Activated CD8-positive, alpha-beta memory T cell treated with anti-CD3 and anti-CD28 coated beads, Interleukin-2, amount 10 ng/mL, durations not matched to agents 7 days and 5 days (primary cell): ENCODE measurements at regions of chr14 and their contacts with region 1.

Region 1: GRCh38 chr14:73741386-73741875 is 27.2 kb upstream of the PNMA1 start:
- DNase-seq: peak; percentile 83
- ATAC-seq: peak; percentile 71
- H3K4me3 Mint-ChIP-seq: peak overlapping the region; percentile 78
- H3K27ac Mint-ChIP-seq: peak overlapping the region; percentile 92
- H3K4me1 Mint-ChIP-seq: peaks cover 71% of the 10 kb centered on the region
- H3K27me3 Mint-ChIP-seq: no peaks in the 10 kb centered on the region

Region 2: DNA sequence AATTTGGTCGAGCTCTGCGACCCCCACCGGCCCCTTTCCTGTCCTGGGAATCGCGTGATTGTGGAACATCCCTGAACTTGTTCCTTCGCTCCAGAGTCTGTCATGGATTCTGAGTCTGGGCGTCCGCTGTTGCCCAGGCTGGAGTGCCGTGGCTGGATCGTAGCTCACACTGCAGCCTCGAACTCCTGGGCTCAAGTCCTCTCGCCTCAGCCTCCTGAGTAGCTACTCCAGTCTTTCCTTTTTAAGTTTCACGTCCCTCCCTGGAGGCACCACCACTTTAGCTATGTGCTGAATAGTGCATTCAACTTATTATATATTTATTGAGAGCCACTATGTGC is 128.4 kb before region 1 on chr14:
- CTCF ChIA-PET with region 1: no interaction called
- DNase-seq: no peak
- ATAC-seq: no peak
- H3K4me3 Mint-ChIP-seq: peak overlapping the region; percentile 79
- H3K27ac Mint-ChIP-seq: peak overlapping the region; percentile 78
- H3K4me1 Mint-ChIP-seq: peaks cover 16% of the 10 kb centered on the region
- H3K27me3 Mint-ChIP-seq: peaks cover 14% of the 10 kb centered on the region

Region 3: DNA sequence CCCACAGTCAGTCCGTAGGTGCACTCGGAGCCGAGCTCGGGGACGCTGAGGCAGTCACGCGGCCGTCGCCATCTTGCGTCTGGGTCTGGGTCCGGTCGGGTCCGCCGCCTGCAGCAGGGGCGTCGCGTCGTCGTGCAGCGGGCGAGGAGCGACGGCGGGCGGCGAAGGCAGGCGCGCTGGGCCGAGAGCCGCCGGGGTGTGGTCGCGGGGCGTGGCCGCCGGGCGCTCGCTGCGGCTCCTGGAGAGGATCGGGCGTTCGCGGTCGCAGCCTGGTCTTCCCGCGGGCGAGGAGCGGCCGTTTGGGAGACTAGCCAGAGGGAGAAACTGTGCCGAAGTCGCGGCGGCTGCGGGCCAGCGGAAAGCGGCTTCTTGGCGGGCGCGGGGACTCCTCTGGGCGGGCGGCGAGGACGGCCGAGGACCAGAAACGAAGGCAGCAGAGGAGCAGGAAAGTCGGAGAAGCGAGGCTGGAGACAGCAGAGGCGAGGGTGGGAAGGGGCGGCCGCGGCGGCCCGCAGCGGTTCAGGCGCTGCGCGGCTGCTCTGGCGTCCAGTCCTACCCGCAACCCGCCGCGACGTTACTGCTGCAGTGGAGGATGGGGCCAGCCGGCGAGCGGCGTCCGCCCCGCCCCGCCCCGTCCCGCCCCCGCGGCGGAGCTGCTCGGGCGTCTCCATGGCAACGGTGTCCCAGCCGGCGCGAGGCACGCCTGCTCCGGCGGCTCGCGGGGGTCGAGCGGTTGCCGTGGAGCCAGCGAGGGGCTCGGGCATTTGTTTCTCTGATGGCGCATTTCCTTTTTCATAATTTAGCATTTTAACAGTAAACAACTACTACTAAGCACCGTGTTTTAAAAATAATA is 27.4 kb before region 1 on chr14 and contains the start of gene PNMA1:
- CTCF ChIA-PET with region 1: interaction called, 20 read pairs
- DNase-seq: peak; percentile 92
- ATAC-seq: peak; percentile 79
- H3K4me3 Mint-ChIP-seq: peak within 1 kb of the TSS; percentile 96
- H3K27ac Mint-ChIP-seq: peak within 1 kb of the TSS; percentile 95
- H3K4me1 Mint-ChIP-seq: peaks cover 19% of the 10 kb centered on the region
- H3K27me3 Mint-ChIP-seq: no peaks in the 10 kb centered on the region
- total RNA-seq, gene PNMA1: 27.1 to 36.6 TPM

Region 4: GRCh38 chr14:73753959-73754882 is 12.8 kb after region 1 on chr14:
- CTCF ChIA-PET with region 1: interaction called, 82 read pairs
- DNase-seq: peak; percentile 87
- ATAC-seq: peak; percentile 34
- H3K4me3 Mint-ChIP-seq: peak overlapping the region; percentile 77
- H3K27ac Mint-ChIP-seq: peak overlapping the region; percentile 92
- H3K4me1 Mint-ChIP-seq: peaks cover 91% of the 10 kb centered on the region
- H3K27me3 Mint-ChIP-seq: no peaks in the 10 kb centered on the region

Region 5: GRCh38 chr14:73771848-73772638 is 30.6 kb after region 1 on chr14:
- CTCF ChIA-PET with region 1: interaction called, 18 read pairs
- DNase-seq: peak; percentile 84
- ATAC-seq: peak; percentile 76
- H3K4me3 Mint-ChIP-seq: peak overlapping the region; percentile 49
- H3K27ac Mint-ChIP-seq: peak overlapping the region; percentile 86
- H3K4me1 Mint-ChIP-seq: peaks cover 72% of the 10 kb centered on the region
- H3K27me3 Mint-ChIP-seq: no peaks in the 10 kb centered on the region

Region 6: GRCh38 chr14:73825551-73826188 is 84.2 kb after region 1 on chr14:
- CTCF ChIA-PET with region 1: interaction called, 18 read pairs
- DNase-seq: peak; percentile 86
- ATAC-seq: peak; percentile 70
- H3K4me3 Mint-ChIP-seq: no peak overlapping the region
- H3K27ac Mint-ChIP-seq: no peak overlapping the region
- H3K4me1 Mint-ChIP-seq: peaks cover 37% of the 10 kb centered on the region
- H3K27me3 Mint-ChIP-seq: no peaks in the 10 kb centered on the region